Stomach (tissue), 19 donors: ENCODE measurements at regions of chr14 and their contacts with region 1.

Region 1: DNA sequence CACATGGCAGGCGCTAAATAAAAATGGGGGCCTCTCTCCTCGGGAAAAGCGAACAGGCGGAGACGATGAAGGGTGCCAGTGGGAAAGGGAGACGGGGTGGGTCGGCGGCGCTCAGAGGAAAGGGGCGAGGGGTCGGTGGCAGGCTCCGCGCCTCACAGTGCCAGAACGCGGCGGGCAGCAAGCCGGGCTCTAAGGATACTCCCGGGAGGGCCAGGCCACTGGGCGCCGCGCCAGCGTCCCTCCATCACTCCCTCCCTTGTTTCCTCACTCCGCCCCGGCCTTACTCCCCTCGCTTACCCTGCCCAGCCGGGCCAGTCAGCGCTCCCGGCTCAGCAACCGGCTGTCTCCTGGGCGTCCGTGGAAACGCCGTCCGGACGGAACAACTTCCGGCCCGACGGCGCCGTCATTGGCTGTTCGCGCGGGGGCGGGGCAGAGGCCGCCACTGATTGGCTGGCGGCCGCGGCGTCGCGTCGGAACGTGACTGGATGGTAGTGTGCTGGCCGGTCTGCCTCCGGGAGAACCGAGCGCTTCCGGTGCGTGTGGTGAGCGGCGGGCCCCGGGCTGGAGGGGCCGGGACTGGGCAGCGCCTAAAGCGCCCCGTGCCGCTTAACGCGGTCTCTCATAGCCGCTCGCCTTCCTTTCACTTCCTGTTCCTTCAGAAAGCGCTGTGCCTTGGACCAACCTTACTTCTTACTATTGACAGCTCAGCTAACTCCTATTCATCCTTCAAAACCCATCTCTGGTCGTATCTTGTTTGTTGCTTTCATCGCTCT is 53.0 kb downstream of the SLC25A47 start:
- DNase-seq: peak; percentile 95 to 99
- H3K4me3 ChIP-seq: peak within 1 kb of the TSS; percentile 62 to 78 (median 68)
- H3K27ac ChIP-seq: peak within 1 kb of the TSS; percentile 89 to 96 (median 94)
- H3K4me1 ChIP-seq: peaks cover 24 to 58% (median 42%) of the 10 kb centered on the region in 4 donors
- H3K27me3 ChIP-seq: no peaks in the 10 kb centered on the region
- CTCF ChIP-seq: no peak
- EP300 ChIP-seq: no peak
- POLR2A ChIP-seq: no peak

Region 2: DNA sequence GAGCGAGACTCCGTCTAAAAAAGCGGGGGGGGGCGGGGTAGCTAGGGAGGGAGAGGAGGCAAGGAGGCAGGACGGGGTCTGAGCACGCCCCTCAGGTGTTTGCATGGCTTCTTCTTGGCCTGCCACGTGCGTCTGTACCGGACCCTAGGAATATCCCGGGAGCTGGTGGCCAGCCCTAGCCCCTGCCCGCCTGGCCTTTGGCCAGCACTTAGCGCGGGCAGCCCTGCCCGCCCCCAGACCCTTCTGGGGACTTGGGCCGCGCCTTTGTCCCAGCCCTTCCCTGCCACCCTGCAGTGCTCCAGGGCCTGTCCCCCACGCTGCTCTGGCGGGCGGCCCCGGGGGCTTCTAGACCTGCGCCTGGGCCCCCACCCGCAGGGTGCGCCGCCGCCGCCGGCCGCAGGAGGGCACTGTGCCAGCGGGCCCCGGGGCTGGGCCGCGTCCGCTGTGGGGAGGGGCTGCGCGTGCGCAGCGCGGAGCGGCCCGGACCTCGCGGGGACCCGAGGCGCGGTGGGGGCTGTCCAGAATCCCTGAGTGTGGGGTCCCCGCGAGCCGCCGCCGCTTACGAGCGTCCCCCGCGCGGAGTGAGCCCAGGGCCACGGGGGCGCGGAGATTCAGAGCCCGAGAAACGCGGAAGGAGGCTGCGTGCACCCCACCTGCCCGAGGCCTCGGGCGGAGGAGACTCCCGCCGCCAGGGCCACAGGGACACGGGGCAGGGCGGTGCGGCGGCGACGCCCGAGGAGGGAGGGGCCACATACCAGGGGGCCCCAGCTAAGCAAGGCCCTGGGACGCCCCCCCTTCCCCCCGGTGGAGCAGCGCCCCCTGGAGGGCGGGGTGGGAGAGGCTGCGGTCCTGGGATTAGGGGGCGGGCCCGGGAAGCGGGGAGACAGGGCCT is 90.9 kb before region 1 on chr14:
- intact Hi-C with region 1: loop called (anchors 10 kb)
- DNase-seq: peak; percentile 76 to 91
- H3K4me3 ChIP-seq: peak overlapping the region; percentile 74 to 87 (median 82)
- H3K27ac ChIP-seq: peak overlapping the region; percentile 92 to 96 (median 94)
- H3K4me1 ChIP-seq: peaks cover 11 to 34% (median 22%) of the 10 kb centered on the region in 4 donors
- H3K27me3 ChIP-seq: no peaks in the 10 kb centered on the region
- CTCF ChIP-seq: peak in 5 of 7 experiments; percentile 45 to 81 (median 73)
- EP300 ChIP-seq: no peak
- POLR2A ChIP-seq: no peak